PC-9 (cell line): ENCODE measurements at regions of chr3 and their contacts with region 1.

Region 1: GRCh38 chr3:179015551-179016020 is 56.0 kb downstream of the ZMAT3 start:
- DNase-seq: peak; percentile 67 to 76
- H3K4me3 ChIP-seq: no peak overlapping the region
- H3K27ac ChIP-seq: no peak overlapping the region
- H3K4me1 ChIP-seq: no peaks in the 10 kb centered on the region
- H3K27me3 ChIP-seq: no peaks in the 10 kb centered on the region
- CTCF ChIP-seq: peak; percentile 97

Region 2: DNA sequence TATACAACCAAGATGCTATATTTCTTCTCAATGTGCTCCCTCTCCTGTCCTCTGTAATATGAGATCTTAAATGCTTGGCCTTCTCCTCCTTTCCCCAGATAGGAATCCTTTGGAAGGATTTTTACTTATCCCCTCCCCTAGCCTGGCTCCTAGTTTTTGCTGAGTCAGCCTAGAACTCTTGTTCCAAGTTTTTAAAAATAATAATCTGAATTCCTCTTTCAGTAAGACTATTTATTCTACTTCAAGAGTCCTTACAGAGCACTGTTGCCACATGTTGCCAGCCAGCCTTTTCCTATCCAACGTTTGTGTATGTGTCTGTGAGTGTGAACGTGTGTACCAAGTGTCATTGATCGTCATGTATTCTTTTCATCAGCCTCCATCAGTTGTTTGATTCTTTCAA is 490.3 kb before region 1 on chr3:
- CTCF ChIA-PET with region 1: no interaction called
- POLR2A ChIA-PET with region 1: no interaction called
- intact Hi-C with region 1: no loop called
- DNase-seq: no peak
- H3K4me3 ChIP-seq: no peak overlapping the region
- H3K27ac ChIP-seq: no peak overlapping the region
- H3K4me1 ChIP-seq: no peaks in the 10 kb centered on the region
- H3K27me3 ChIP-seq: no peaks in the 10 kb centered on the region
- CTCF ChIP-seq: no peak

Region 3: DNA sequence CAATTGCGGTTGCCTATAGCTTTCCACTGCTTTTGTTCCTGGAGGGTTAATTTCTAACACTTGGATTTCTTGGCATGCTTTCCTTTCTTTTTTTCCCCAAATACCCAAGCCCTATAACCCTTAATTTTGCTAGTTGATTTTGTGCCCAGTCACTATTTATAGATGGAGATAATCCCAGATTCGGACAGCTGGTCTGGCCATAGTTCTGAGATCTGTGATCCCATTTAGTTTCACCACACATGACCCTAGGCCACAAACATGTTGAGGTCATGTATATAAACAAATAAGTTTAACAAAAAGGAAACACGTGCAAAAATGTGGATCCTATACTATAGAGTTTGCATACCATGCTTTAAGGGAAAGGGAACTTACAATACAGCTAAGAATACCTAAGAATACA is 55.4 kb before region 1 on chr3:
- CTCF ChIA-PET with region 1: no interaction called
- POLR2A ChIA-PET with region 1: no interaction called
- intact Hi-C with region 1: no loop called
- DNase-seq: no peak
- H3K4me3 ChIP-seq: no peak overlapping the region
- H3K27ac ChIP-seq: no peak overlapping the region
- H3K4me1 ChIP-seq: no peaks in the 10 kb centered on the region
- H3K27me3 ChIP-seq: no peaks in the 10 kb centered on the region
- CTCF ChIP-seq: no peak

Region 4: GRCh38 chr3:179091113-179091512 is 75.5 kb after region 1 on chr3:
- CTCF ChIA-PET with region 1: interaction called, 4 read pairs
- POLR2A ChIA-PET with region 1: no interaction called
- intact Hi-C with region 1: loop called (anchors 5 kb)
- DNase-seq: no peak
- H3K4me3 ChIP-seq: no peak overlapping the region
- H3K27ac ChIP-seq: no peak overlapping the region
- H3K4me1 ChIP-seq: no peaks in the 10 kb centered on the region
- H3K27me3 ChIP-seq: no peaks in the 10 kb centered on the region
- CTCF ChIP-seq: no peak

Region 5: DNA sequence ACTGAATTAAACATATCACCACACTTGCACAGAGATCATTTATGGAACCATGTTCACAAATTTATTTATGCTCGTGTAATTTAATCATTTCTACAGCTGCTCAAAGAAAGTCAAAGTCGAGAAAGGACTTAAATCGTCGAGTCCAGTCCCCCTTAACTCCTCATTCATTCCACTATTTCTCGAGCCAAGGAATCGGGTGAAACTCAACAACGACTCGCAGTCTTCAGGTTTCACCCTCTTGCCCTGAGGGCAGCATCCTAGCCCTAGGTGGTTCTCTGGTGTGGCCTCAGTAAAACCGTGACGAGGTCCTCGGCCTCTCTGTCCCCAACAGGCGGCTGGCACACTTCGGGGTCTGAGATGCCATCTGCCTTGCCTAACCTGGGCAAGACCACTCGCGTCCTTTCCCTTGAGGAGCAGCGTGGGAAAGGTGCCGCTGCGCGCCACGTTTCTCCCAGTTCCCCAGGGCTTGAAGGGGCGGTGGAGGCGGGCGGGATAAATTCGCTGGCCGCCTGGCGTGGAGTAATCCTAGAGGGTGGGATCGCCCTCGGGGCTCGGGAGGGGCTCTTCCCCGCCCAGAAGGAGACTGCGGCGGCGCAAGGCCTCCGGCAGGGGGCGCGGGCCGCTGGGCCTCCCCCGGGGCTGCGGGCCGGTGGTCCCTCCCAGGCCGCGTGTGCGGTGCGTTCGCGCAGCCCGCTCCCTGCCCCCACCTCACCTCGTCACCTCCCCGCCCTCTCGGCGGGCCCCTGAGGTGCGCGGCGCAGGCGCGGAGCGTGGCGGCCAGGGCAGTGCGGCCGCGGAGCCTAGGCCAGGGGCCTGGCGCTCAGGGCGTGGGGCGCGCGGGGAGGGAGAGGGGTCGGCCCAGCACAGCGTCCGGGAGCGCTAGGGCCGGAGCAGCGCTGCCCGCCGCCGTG is 307.0 kb after region 1 on chr3 and contains the start of gene ZNF639:
- CTCF ChIA-PET with region 1: interaction called, 11 read pairs
- POLR2A ChIA-PET with region 1: no interaction called
- intact Hi-C with region 1: loop called (anchors 1 kb)
- DNase-seq: peak; percentile 72 to 91
- H3K4me3 ChIP-seq: peak within 1 kb of the TSS; percentile 80
- H3K27ac ChIP-seq: peak within 1 kb of the TSS; percentile 60
- H3K4me1 ChIP-seq: peaks cover 25% of the 10 kb centered on the region
- H3K27me3 ChIP-seq: no peaks in the 10 kb centered on the region
- CTCF ChIP-seq: peak; percentile 80
- total RNA-seq, gene ZNF639: 39.3 and 40.3 TPM in 2 replicates

Region 6: DNA sequence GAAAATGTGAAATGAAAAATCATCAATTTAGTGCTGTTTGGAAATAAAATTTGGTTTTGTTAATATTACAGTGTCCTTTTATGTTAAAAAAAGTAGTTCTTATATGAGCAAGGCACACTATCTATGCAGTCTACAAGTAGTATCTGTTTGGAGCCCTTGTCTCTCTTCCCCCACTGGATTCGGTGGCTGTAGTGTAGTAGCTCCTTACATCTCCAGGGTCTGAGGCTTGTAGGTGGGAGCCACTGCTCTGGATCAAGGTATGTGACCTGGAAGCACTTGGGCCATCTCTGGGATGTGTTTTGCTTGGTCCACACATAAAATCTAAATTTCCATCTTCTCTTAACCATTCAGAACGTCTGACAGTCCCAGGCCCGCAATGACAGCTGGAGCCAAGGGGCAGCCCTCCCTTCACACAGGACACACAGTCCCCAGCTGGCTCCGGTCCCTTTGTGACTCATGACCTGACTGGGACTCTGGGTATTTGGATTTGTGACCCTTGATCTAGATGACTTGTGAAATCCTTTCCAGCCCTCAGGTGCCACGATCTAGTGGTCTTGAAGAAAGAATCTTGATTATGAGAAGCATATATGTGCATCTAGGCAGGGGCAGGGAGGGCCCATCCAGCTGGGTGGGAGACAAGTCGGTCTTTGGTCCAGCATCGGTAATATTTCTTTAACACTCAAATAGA is 717.2 kb after region 1 on chr3:
- CTCF ChIA-PET with region 1: no interaction called
- POLR2A ChIA-PET with region 1: no interaction called
- intact Hi-C with region 1: no loop called
- DNase-seq: no peak
- H3K4me3 ChIP-seq: no peak overlapping the region
- H3K27ac ChIP-seq: no peak overlapping the region
- H3K4me1 ChIP-seq: peaks cover 31% of the 10 kb centered on the region
- H3K27me3 ChIP-seq: no peaks in the 10 kb centered on the region
- CTCF ChIP-seq: no peak